ENCODE measurements at regions of chr2 and their contacts with region 1.

Region 1: GRCh38 chr2:191051825-191052778 is 38.1 kb upstream of the STAT1 start:
- DNase-seq: peak in 1 of 2 experiments; percentile 72
- ATAC-seq: peak; percentile 22 to 39; a peak in 3 of 6 replicates
- H3K4me3 ChIP-seq: no peak overlapping the region
- H3K27ac ChIP-seq: peak overlapping the region; percentile 92 to 98
- H3K4me1 ChIP-seq: peaks cover 55% of the 10 kb centered on the region
- CTCF ChIP-seq: peak; percentile 86
- EP300 ChIP-seq: no peak
- POLR2A ChIP-seq: no peak
- RAD21 ChIP-seq: peak; percentile 85 to 90

Region 2: DNA sequence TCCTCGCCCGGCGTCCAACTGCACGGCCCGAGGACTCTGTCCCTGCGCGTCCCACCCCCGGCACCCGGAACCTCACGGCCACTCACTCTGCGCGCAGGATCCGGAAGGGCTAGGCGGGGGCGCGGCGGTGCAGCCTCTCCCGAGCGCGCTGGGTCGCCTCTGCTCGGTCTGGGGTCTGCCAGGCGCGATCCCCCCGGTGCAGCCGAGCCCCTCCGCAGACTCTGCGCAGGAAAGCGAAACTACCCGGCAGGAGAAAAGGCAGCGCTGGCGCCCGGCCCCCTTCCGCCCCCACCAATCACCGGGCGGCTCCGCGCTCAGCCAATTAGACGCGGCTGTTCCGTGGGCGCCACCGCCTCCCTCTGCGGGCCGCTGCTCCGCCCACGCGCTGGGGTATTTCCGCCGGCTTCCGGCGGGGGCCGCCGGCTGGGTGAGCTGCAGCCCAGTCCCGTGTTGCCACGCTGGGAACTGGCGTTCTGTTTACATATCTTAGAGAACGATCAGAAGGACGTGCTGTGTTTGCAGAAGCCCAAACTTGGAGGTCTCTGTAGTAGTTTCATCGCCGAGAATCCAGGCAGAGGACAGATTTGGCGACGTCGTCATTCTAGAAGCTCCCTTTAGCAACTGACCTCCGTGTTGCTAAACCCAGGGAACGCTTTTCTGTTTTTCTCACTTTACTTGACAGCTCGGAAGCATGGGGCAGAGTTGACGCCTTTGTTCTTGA is 38.0 kb before region 1 on chr2 and contains the start of gene STAT1:
- CTCF ChIA-PET with region 1: interaction called, 7 read pairs
- POLR2A ChIA-PET with region 1: interaction called, 25 read pairs
- DNase-seq: peak; percentile 90 to 94
- ATAC-seq: peak; percentile 94 to 96
- H3K4me3 ChIP-seq: peak within 1 kb of the TSS; percentile 82
- H3K27ac ChIP-seq: peak within 1 kb of the TSS; percentile 85 to 91
- H3K4me1 ChIP-seq: peaks cover 54% of the 10 kb centered on the region
- CTCF ChIP-seq: no peak
- EP300 ChIP-seq: 0 out of 5 replicates have a peak, but pooled peaks of 1 of the 2 experiments have one; percentile 17
- POLR2A ChIP-seq: peak; percentile 88
- RAD21 ChIP-seq: peak in 1 of 2 experiments; percentile 42; a peak in 3 of 5 replicates
- polyA plus RNA-seq, gene STAT1: 167 and 182 TPM in 2 replicates

Region 3: DNA sequence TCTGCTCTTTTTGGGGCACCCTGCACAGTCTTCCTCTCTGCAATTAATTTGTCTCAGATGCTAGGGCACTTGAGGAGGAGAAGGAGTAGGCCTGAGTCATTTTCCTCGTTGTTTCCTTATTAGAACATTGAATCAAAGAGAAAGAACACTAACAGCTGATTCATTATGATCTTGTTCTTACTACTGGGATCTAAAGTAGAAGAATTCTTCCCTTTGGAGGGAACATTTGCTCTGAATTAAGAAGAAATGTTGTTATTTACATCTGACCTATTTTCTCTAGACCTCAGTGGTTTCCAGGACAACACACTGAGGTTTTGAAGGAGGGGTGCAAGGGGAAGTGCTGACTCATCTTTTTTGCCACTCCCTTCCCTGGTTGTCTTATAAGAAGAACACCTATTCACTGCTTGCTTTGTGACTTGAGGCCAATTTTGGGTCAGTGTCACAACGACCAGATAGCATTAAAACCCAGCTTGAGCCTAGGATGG is 13.8 kb before region 1 on chr2:
- CTCF ChIA-PET with region 1: interaction called, 37 read pairs
- POLR2A ChIA-PET with region 1: interaction called, 11 read pairs
- DNase-seq: peak in 1 of 2 experiments; percentile 68
- ATAC-seq: 0 out of 6 replicates have a peak, but pooled peaks of 1 of the 2 experiments have one; percentile 11
- H3K4me3 ChIP-seq: no peak overlapping the region
- H3K27ac ChIP-seq: peak overlapping the region; percentile 73 to 92
- H3K4me1 ChIP-seq: peaks cover 60% of the 10 kb centered on the region
- CTCF ChIP-seq: no peak
- EP300 ChIP-seq: no peak
- POLR2A ChIP-seq: no peak
- RAD21 ChIP-seq: no peak

Region 4: DNA sequence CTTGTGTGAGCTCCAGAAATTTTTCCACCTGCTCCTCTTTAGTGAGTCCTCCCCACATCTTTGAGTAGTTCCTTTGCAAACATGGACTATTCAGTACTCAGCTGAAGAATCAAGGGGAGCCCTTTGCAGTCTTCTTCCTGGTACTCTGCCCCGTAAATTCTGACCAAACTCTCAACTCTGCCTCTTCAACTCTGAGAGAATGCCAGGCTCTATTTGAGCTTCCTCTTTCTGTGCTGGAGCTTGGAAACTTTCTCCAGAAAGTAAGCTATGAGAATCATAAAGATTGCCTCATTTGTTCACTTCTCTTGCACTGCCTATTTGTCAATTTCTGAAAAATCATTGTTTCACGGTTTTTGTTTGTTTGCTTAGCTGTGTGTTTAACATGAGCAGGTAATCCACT is 106.1 kb after region 1 on chr2:
- CTCF ChIA-PET with region 1: interaction called, 97 read pairs
- POLR2A ChIA-PET with region 1: interaction called, 4 read pairs
- DNase-seq: no peak
- ATAC-seq: no peak
- H3K4me3 ChIP-seq: no peak overlapping the region
- H3K27ac ChIP-seq: 0 out of 6 replicates have a peak overlapping the region, but pooled peaks of 1 of the 2 experiments have one; percentile 29
- H3K4me1 ChIP-seq: peaks cover 19% of the 10 kb centered on the region; the same call in 2 of the 3 replicates
- CTCF ChIP-seq: no peak
- EP300 ChIP-seq: no peak
- POLR2A ChIP-seq: no peak
- RAD21 ChIP-seq: no peak

Region 5: GRCh38 chr2:191171708-191172355 is 119.7 kb after region 1 on chr2:
- CTCF ChIA-PET with region 1: interaction called, 38 read pairs
- POLR2A ChIA-PET with region 1: interaction called, 11 read pairs
- DNase-seq: peak; percentile 37 to 92
- ATAC-seq: peak; percentile 76 to 85
- H3K4me3 ChIP-seq: no peak overlapping the region
- H3K27ac ChIP-seq: peak overlapping the region; percentile 94 to 95
- H3K4me1 ChIP-seq: peaks cover 92% of the 10 kb centered on the region
- CTCF ChIP-seq: no peak
- EP300 ChIP-seq: peak; percentile 82 to 94; a peak in 4 of 5 replicates
- POLR2A ChIP-seq: no peak
- RAD21 ChIP-seq: peak in 1 of 2 experiments; percentile 21; a peak in 3 of 5 replicates

Region 6: DNA sequence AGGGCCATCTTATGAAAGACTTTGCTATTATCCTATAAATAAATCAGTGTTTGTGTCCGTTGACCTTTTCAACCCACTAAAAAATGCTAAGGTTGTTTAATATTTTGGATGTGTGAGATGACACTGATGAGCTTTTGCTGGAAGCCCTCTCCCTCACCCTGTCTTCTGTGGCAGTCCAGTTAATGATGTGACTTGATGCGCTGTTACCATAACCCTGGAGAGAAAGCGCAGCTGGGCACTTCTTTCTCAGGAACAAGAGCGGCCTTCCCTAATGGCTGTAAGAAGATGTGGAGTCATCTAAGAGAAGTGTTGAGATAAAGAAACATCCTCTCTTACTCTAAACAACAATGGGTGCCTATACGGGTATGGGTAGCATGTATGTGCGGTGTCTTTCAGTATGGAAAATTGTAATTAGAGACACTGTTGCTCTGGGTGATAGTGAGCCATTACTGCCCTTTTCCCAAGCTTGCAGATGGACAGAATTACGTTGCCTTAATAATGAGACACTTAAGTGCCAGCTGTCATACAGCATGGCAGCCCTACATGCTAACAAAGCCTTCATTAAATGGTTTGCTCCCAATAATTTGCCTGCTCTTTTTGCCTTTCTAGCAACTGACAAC is 460.2 kb after region 1 on chr2:
- CTCF ChIA-PET with region 1: interaction called, 86 read pairs
- POLR2A ChIA-PET with region 1: no interaction called
- DNase-seq: no peak
- ATAC-seq: no peak
- H3K4me3 ChIP-seq: no peak overlapping the region
- H3K27ac ChIP-seq: peak overlapping the region; percentile 12 to 50; a peak in 4 of 6 replicates
- H3K4me1 ChIP-seq: peaks cover 47% of the 10 kb centered on the region
- CTCF ChIP-seq: no peak
- EP300 ChIP-seq: no peak
- POLR2A ChIP-seq: no peak
- RAD21 ChIP-seq: no peak

Region 7: DNA sequence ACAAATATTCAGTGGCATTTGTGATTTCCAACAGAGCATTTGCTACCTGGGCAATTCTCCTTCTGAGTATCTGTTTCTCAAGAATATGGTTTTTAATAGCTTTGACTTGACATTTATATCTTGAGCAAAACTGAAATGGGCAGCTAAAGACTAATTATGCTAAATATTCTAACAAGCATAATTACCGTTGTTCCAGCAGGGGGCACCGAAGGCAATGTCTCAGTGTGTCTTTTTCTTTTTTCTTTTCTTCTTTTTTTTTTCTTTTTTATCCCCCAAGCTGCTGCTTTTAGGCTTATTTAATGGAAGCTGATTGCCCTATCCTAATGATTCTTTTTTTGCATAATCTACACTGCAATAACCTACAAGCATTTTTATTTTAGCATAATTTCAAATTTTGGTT is 487.0 kb after region 1 on chr2:
- CTCF ChIA-PET with region 1: interaction called, 13 read pairs
- POLR2A ChIA-PET with region 1: no interaction called
- DNase-seq: peak; percentile 23 to 29
- ATAC-seq: peak in 1 of 2 experiments; percentile 42; a peak in 1 of 6 replicates
- H3K4me3 ChIP-seq: no peak overlapping the region
- H3K27ac ChIP-seq: no peak overlapping the region
- H3K4me1 ChIP-seq: no peaks in the 10 kb centered on the region
- CTCF ChIP-seq: peak; percentile 41
- EP300 ChIP-seq: no peak
- POLR2A ChIP-seq: no peak
- RAD21 ChIP-seq: peak; percentile 32 to 39; a peak in 4 of 5 replicates